ENCODE measurements at regions of chr6 and their contacts with region 1.

Region 1: DNA sequence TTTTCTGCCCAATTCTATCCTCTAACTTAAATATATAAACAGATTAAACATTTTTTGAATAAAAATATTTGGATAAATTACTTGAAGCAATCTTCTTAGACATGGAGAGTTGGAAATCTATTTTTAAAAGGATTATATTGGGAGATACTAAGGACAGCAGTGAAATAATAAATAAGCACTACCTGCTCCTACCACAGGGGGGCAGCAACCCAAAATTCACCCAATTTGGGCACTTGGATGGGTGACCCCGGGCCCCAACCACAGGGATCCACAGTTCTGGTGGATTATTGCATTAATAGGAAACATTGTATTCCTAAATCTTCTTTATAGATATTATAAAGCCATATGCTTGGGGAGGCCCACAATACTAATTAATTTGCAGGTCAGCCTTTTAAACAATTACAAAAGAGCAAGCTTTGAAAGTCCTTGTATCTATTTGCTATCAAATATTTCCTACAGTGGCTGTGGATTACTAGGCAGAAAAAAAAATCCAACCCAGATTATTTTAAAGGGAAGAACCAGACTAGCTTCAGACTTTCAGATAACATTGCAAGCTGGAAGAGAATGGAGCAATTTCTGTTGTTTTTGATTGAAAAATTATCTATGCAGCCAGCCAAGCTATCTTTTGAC is 66.4 kb upstream of the PDE10A start:
- DNase-seq: peak; percentile 53
- ATAC-seq: no peak
- H3K4me3 Mint-ChIP-seq: no peak overlapping the region
- H3K27ac Mint-ChIP-seq: no peak overlapping the region
- H3K4me1 Mint-ChIP-seq: no peaks in the 10 kb centered on the region
- H3K27me3 Mint-ChIP-seq: peaks cover 4% of the 10 kb centered on the region

Region 2: DNA sequence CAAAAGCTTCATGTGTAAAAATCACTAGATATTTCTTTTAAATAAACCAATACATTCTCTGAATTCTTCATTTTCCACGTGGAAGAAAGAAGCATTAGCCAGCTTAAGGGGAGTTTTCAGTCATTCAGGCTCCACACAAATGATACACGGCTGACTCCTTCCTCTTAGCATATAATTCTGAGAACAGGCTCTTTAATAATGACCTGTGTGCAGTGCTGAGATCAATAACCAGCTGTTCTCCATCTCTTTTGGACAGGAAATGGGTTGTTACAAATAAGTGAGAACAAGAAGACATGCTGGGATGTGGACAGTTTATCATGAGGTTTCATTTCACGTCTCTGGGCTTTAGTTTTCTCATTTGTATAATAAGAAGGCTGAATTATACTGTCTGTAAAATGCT is 273.1 kb before region 1 on chr6:
- CTCF ChIA-PET with region 1: no interaction called
- POLR2A ChIA-PET with region 1: no interaction called
- intact Hi-C with region 1: loop called in 1 of 2 experiments (anchors 10 kb)
- DNase-seq: no peak
- ATAC-seq: no peak
- H3K4me3 Mint-ChIP-seq: no peak overlapping the region
- H3K27ac Mint-ChIP-seq: no peak overlapping the region
- H3K4me1 Mint-ChIP-seq: no peaks in the 10 kb centered on the region
- H3K27me3 Mint-ChIP-seq: peaks cover 11% of the 10 kb centered on the region

Region 3: GRCh38 chr6:165615636-165616035 is 113.8 kb before region 1 on chr6:
- CTCF ChIA-PET with region 1: no interaction called
- POLR2A ChIA-PET with region 1: no interaction called
- intact Hi-C with region 1: no loop called
- DNase-seq: no peak
- ATAC-seq: no peak
- H3K4me3 Mint-ChIP-seq: no peak overlapping the region
- H3K27ac Mint-ChIP-seq: no peak overlapping the region
- H3K4me1 Mint-ChIP-seq: no peaks in the 10 kb centered on the region
- H3K27me3 Mint-ChIP-seq: no peaks in the 10 kb centered on the region

Region 4: DNA sequence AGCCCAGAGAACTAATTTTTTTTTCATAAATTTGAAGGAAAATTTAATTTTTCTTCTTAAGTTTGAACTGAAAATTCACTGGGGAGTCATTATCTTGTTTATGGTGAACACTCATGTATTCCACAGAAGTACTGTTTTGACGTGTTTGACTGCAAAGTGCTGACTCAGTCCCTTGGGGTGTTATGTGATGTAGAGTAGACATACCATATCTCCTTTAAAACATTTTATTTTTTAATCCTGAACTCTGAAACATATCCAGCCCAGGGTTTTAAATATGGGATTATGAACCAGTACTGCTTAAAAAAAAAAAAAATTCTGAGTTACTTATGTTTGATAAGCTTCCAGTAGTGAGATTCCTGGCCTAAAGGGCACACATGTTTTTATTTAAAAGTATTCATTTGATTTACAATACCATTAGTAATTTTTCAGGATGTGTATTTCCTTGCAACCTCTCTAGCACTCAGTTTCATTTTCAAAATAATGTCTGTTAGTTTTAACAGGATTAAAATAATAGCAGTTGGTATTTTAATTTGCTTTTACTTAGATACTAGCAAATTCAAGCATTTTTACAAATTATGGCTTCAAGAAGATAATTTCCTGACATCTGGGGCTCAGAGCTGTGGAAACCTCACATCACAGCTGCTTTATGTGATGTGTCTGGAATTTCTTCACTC is 15.3 kb after region 1 on chr6:
- CTCF ChIA-PET with region 1: interaction called, 10 read pairs
- POLR2A ChIA-PET with region 1: no interaction called
- intact Hi-C with region 1: no loop called
- DNase-seq: no peak
- ATAC-seq: no peak
- H3K4me3 Mint-ChIP-seq: no peak overlapping the region
- H3K27ac Mint-ChIP-seq: no peak overlapping the region
- H3K4me1 Mint-ChIP-seq: no peaks in the 10 kb centered on the region
- H3K27me3 Mint-ChIP-seq: peaks cover 2% of the 10 kb centered on the region

Region 5: GRCh38 chr6:165766457-165766856 is 37.0 kb after region 1 on chr6:
- CTCF ChIA-PET with region 1: no interaction called
- POLR2A ChIA-PET with region 1: no interaction called
- intact Hi-C with region 1: no loop called
- DNase-seq: no peak
- ATAC-seq: no peak
- H3K4me3 Mint-ChIP-seq: no peak overlapping the region
- H3K27ac Mint-ChIP-seq: no peak overlapping the region
- H3K4me1 Mint-ChIP-seq: no peaks in the 10 kb centered on the region
- H3K27me3 Mint-ChIP-seq: no peaks in the 10 kb centered on the region

Region 6: DNA sequence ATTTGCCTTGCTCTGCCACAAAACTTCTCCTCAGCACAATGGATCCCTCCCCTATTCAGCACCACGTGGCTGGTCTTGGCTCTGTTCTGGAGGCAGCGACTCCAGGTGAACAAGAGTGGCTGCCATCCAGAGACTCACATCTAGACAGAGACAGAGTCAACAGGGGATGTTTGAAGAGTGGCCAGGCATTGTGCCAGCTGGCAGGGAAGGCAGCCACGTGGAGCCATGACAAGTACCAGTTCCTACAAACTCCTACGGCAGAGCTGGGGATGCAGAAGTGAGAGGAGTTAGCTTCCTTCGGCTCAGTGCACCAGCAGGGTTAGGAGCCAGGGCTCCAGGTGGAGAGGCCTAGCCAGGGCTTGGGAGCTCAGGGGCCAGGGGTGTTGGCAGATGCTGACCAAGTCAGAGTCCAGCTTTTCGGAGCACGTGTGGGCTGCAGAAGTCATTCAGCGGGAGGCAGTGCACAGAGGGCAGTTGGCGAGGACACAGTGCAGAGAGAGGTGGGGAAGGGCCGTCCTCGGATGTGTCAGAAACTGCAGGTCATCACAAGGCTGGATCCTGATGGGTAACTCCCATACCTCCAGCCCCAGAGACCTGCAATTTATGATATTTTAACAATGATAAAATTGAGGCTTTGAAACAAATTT is 105.3 kb after region 1 on chr6:
- CTCF ChIA-PET with region 1: no interaction called
- POLR2A ChIA-PET with region 1: no interaction called
- intact Hi-C with region 1: no loop called
- DNase-seq: no peak
- ATAC-seq: no peak
- H3K4me3 Mint-ChIP-seq: no peak overlapping the region
- H3K27ac Mint-ChIP-seq: no peak overlapping the region
- H3K4me1 Mint-ChIP-seq: peaks cover 10% of the 10 kb centered on the region
- H3K27me3 Mint-ChIP-seq: peaks cover 31% of the 10 kb centered on the region

Region 7: GRCh38 chr6:165850434-165851019 is 121.1 kb after region 1 on chr6:
- CTCF ChIA-PET with region 1: interaction called, 3 read pairs
- POLR2A ChIA-PET with region 1: no interaction called
- intact Hi-C with region 1: loop called (anchors 1 to 5 kb)
- DNase-seq: peak; percentile 77
- ATAC-seq: peak; percentile 66
- H3K4me3 Mint-ChIP-seq: no peak overlapping the region
- H3K27ac Mint-ChIP-seq: no peak overlapping the region
- H3K4me1 Mint-ChIP-seq: peaks cover 10% of the 10 kb centered on the region
- H3K27me3 Mint-ChIP-seq: peaks cover 46% of the 10 kb centered on the region

Region 8: GRCh38 chr6:166106076-166106686 is 376.8 kb after region 1 on chr6:
- CTCF ChIA-PET with region 1: no interaction called
- POLR2A ChIA-PET with region 1: no interaction called
- intact Hi-C with region 1: loop called in 1 of 2 experiments (anchors 1 kb)
- DNase-seq: peak; percentile 84
- ATAC-seq: peak; percentile 83
- H3K4me3 Mint-ChIP-seq: no peak overlapping the region
- H3K27ac Mint-ChIP-seq: no peak overlapping the region
- H3K4me1 Mint-ChIP-seq: peaks cover 3% of the 10 kb centered on the region
- H3K27me3 Mint-ChIP-seq: peaks cover 9% of the 10 kb centered on the region